IMR-90 (cell line): ENCODE measurements at regions of chr3 and their contacts with region 1.

Region 1: DNA sequence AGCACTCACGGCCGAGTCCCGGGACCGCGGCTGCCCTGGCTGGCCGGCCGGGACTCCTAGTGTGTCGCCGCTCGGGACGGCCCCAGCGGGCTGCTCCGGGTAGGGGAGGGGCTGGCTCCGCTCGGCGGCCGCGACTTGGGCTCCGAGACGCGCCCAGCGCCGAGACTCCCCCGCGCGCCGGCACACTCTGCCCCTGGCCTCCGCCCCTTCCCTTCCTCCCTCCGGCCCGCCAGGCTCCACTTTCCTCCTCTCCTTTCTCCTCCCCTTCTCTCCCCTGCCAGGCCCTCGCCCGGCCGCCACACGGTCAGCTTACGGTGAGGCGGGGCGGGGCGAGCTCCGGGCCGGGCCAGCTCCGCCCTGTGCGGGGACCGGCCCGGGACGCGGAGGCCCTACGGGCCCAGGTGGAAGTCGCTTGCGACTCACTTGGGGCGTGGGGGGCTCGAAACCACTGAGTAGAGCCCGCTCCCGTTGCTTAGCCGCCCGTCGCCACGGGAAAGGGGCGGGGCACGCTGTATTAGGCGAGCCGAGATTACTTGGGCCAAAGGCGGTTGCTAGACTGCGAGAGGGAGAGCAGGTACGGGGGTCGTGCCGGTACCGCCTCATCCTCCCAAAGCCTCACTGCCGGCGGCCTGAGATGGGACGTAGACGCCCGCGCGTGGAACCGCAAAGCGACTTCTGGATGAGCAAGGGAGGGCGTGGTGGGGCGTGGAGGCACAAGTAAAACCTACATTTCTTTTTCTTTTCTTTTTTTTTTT is at the start of gene ITGB5:
- DNase-seq: peak; percentile 63
- ATAC-seq: peak; percentile 85
- H3K4me3 ChIP-seq: peak within 1 kb of the TSS; percentile 92
- H3K27ac ChIP-seq: peak within 1 kb of the TSS; percentile 72
- H3K4me1 ChIP-seq: peaks cover 16% of the 10 kb centered on the region
- H3K27me3 ChIP-seq: no peaks in the 10 kb centered on the region
- CTCF ChIP-seq: no peak
- POLR2A ChIP-seq: peak; percentile 73
- RAD21 ChIP-seq: peak; percentile 16; the same call in 1 of the 2 replicates
- total RNA-seq, gene ITGB5: 71.7 and 85.0 TPM in 2 replicates

Region 2: DNA sequence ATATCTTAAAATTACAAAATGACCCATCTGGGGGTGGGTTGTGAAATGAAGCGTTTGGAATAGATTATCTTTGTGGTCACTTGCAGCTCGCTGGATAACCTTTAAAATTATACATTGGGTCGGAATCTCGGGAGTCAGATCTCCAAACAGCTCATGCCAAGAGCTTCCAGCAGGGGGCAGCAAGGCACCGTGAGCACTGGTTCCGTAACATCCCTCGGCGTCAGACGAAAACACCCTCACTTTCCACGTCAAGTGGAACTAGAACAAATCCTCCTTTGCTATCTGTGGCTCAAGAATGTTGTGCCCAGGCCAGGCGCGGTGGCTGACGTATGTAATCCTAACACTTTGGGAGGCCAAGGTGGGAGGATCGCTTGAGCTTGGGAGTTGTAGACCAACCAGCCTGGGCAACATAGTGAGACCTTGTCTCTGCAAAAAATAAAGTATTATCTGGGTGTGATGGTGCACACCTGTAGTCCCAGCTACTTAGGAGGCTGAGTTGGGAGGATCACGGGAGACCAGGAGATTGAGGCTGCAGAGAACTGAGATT is 126.0 kb before region 1 on chr3:
- CTCF ChIA-PET with region 1: interaction called, 3 read pairs
- POLR2A ChIA-PET with region 1: no interaction called
- dilution Hi-C with region 1: loop called (anchors 25 kb)
- in situ Hi-C with region 1: no loop called
- intact Hi-C with region 1: loop called (anchors 5 kb)
- DNase-seq: peak; percentile 89
- ATAC-seq: peak; percentile 85
- H3K4me3 ChIP-seq: no peak overlapping the region
- H3K27ac ChIP-seq: no peak overlapping the region
- H3K4me1 ChIP-seq: peaks cover 7% of the 10 kb centered on the region
- H3K27me3 ChIP-seq: no peaks in the 10 kb centered on the region
- CTCF ChIP-seq: peak; percentile 96
- POLR2A ChIP-seq: peak; percentile 39; the same call in 1 of the 2 replicates
- RAD21 ChIP-seq: peak; percentile 98

Region 3: DNA sequence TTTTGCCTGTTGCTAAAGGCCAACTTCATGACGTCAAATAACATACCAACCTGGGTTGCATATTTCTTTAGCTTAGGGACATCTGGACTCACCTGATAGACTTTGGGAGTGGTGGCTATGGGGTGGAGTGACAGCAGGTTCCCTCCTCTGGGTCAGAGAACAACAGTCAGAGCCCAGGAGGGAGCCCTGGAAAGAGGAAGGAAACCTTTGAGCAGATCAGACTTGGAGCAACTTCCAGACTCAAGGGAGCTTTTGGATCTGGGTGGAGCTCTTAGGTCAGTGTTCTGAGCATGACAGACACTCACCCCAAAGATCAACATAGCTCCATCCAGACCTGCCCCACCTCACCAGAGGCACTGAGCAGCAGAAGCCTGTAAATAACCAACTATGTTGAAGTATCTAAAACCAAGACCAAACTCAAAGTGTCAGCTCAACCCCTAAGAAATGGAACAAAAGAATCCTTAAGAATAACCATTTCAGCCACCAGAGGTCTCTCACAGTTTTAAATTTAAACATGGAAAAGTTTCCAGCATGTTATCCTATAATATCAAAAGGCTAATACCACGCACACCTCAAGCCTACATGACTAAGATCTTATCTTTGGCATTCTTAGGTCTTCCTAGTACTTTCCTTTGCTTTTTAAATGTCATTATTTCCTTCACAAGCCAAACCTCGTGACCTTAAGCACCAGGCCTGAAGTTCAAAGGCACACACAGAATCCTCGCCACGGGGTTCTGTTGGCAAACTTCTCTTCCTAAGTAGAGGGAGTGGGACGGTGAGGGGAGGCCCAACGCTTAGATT is 100.7 kb before region 1 on chr3:
- CTCF ChIA-PET with region 1: interaction called, 3 read pairs
- POLR2A ChIA-PET with region 1: no interaction called
- dilution Hi-C with region 1: no loop called
- in situ Hi-C with region 1: no loop called
- intact Hi-C with region 1: loop called (anchors 1 kb)
- DNase-seq: peak; percentile 60
- ATAC-seq: peak; percentile 53
- H3K4me3 ChIP-seq: no peak overlapping the region
- H3K27ac ChIP-seq: no peak overlapping the region
- H3K4me1 ChIP-seq: peaks cover 13% of the 10 kb centered on the region
- H3K27me3 ChIP-seq: no peaks in the 10 kb centered on the region
- CTCF ChIP-seq: peak; percentile 57
- POLR2A ChIP-seq: no peak
- RAD21 ChIP-seq: peak; percentile 55

Region 4: DNA sequence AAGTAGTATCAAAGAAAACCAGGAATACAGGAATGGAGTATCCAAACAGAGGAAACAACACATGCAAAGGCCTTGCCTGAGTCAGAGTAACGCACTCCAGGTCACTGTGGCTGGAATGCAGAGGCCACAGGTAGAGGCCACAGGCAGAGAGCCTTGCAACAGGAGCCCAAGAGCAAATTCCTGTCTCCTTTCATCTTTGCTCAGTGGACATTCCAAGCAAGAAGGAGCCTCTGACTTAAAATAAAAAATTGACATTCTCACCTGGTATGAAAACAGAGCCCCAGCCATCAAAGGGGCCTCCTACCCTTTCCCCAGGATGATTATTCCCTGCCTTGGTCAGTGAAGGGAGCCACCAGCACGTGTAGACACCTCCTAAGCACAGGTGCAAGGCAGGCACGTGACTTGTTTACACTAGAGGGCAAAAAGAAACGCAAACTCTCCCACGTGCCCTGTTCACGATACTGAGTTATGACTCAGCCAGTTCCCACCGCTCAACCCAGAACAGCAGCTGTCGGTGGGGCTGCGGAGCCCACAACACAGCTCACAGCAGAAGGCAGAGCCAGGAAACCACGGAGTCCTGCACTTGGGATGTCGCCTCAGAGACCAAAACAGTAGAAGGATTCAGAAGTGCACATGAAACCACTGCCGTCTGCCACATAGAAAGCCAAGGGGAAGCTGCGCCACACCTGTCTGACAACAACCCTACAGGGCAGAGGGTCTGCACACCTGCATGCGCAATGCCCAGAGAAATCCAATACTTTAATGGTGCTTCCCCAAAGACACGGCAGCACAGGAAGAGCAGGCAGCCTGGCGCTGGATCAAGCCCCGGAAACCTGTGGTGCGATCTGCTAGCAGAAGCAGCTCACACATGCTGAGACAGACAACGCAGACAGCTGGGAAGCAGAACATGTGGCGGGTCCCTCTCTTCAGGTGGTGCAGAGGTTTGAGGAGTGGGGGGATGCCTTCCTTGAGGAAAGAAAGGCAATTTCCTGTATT is 52.3 kb before region 1 on chr3:
- CTCF ChIA-PET with region 1: no interaction called
- POLR2A ChIA-PET with region 1: interaction called, 4 read pairs
- dilution Hi-C with region 1: no loop called
- in situ Hi-C with region 1: no loop called
- intact Hi-C with region 1: loop called (anchors 5 kb)
- DNase-seq: peak; percentile 98
- ATAC-seq: peak; percentile 56
- H3K4me3 ChIP-seq: no peak overlapping the region
- H3K27ac ChIP-seq: peak overlapping the region; percentile 38
- H3K4me1 ChIP-seq: peaks cover 34% of the 10 kb centered on the region
- H3K27me3 ChIP-seq: no peaks in the 10 kb centered on the region
- CTCF ChIP-seq: no peak
- POLR2A ChIP-seq: no peak; the same call in 1 of the 2 replicates
- RAD21 ChIP-seq: no peak; the same call in 1 of the 2 replicates

Region 5: DNA sequence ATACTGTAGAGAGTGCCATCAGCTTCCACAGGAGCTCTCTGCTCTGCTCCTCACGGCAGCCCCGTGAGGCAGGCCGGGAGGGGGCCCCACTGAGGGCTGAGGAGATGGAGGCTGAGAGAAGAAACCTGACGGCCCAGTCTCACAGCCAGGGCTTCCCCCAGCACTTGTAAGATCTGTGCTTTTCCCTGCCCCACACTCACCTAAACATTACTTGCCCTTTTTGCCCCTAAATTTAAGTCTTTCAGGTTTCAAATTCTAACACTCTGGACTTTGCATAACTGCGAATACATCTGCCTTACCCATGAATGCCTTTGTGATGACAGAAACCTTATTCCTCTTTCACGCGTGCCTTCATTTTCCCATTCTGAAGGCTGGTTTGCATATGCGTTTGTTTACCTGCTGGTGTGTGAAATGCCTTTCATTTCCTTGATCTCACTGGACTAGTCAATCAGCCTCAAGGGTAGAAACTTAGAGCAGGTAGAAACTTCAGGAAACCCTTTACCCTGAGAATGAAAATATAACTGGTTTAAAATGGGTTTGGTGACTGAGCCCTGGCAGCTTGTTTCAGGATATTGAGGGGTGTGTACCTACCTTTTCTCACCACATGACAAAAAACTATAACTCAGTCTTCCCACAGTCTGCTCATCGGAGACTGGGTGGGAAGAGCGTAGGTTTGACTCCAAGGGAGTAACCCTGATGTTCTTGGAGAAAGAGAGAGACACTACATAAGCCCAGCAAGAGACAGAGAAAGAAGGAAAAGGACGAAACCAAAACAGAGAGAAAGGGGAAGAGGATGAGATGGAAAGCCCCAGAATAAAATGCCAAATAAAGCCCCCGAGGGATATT is 305.1 kb after region 1 on chr3:
- CTCF ChIA-PET with region 1: no interaction called
- POLR2A ChIA-PET with region 1: no interaction called
- dilution Hi-C with region 1: no loop called
- in situ Hi-C with region 1: no loop called
- intact Hi-C with region 1: no loop called
- DNase-seq: no peak
- ATAC-seq: no peak
- H3K4me3 ChIP-seq: no peak overlapping the region
- H3K27ac ChIP-seq: no peak overlapping the region
- H3K4me1 ChIP-seq: peaks cover 17% of the 10 kb centered on the region
- H3K27me3 ChIP-seq: 0 out of 2 replicates have a peak, but pooled peaks cover 1% of the 10 kb centered on the region
- CTCF ChIP-seq: no peak
- POLR2A ChIP-seq: no peak
- RAD21 ChIP-seq: no peak